Ovary (tissue), 10 donors: ENCODE measurements at regions of chr2 and their contacts with region 1.

Region 1: GRCh38 chr2:197184959-197185586 is 125.5 kb downstream of the ANKRD44 start:
- DNase-seq: peak; percentile 47 to 79 (median 59)
- H3K4me3 ChIP-seq: no peak overlapping the region
- H3K27ac ChIP-seq: no peak overlapping the region
- H3K4me1 ChIP-seq: no peaks in the 10 kb centered on the region
- H3K27me3 ChIP-seq: no peaks in the 10 kb centered on the region
- CTCF ChIP-seq: no peak
- EP300 ChIP-seq: no peak
- POLR2A ChIP-seq: no peak

Region 2: GRCh38 chr2:196926562-196927375 is 258.3 kb before region 1 on chr2 and contains the start of gene PGAP1:
- intact Hi-C with region 1: no loop called
- DNase-seq: peak; percentile 91 to 95 (median 92)
- H3K4me3 ChIP-seq: peak within 1 kb of the TSS; percentile 81
- H3K27ac ChIP-seq: peak within 1 kb of the TSS; percentile 88 to 96
- H3K4me1 ChIP-seq: no peaks in the 10 kb centered on the region
- H3K27me3 ChIP-seq: no peaks in the 10 kb centered on the region
- CTCF ChIP-seq: peak in 1 of 3 donors; percentile 10
- EP300 ChIP-seq: no peak
- POLR2A ChIP-seq: peak; percentile 67
- total RNA-seq, gene PGAP1: 11.8 to 39.1 (median 20.6) TPM

Region 3: DNA sequence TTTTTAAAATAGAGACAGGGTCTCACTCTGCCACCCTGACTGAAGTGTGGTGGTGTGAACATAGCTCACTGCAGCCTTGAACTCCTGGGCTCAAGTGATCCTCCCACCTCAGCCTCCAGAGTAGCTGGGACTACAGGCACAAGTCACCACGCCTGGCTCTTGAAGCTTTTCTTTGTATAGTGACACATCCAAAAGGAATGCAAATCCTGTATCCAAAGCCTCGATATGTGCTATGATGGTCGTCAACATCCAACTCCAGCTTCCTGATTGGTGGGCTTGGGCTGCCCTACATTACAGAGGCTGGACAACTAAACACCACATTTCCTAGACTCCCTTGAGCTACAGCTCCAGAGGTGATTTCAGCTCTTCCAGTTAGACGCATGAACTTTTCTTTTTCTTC is 156.8 kb before region 1 on chr2:
- intact Hi-C with region 1: loop called in 1 of 4 experiments (anchors 10 kb)
- DNase-seq: no peak
- H3K4me3 ChIP-seq: no peak overlapping the region
- H3K27ac ChIP-seq: no peak overlapping the region
- H3K4me1 ChIP-seq: no peaks in the 10 kb centered on the region
- H3K27me3 ChIP-seq: no peaks in the 10 kb centered on the region
- CTCF ChIP-seq: no peak
- EP300 ChIP-seq: no peak
- POLR2A ChIP-seq: no peak

Region 4: GRCh38 chr2:197054437-197054836 is 130.6 kb before region 1 on chr2:
- intact Hi-C with region 1: no loop called
- DNase-seq: no peak
- H3K4me3 ChIP-seq: no peak overlapping the region
- H3K27ac ChIP-seq: no peak overlapping the region
- H3K4me1 ChIP-seq: no peaks in the 10 kb centered on the region
- H3K27me3 ChIP-seq: no peaks in the 10 kb centered on the region
- CTCF ChIP-seq: no peak
- EP300 ChIP-seq: no peak
- POLR2A ChIP-seq: no peak